Heart right ventricle (tissue), 16 donors: ENCODE measurements at regions of chr1 and their contacts with region 1.

Region 1: DNA sequence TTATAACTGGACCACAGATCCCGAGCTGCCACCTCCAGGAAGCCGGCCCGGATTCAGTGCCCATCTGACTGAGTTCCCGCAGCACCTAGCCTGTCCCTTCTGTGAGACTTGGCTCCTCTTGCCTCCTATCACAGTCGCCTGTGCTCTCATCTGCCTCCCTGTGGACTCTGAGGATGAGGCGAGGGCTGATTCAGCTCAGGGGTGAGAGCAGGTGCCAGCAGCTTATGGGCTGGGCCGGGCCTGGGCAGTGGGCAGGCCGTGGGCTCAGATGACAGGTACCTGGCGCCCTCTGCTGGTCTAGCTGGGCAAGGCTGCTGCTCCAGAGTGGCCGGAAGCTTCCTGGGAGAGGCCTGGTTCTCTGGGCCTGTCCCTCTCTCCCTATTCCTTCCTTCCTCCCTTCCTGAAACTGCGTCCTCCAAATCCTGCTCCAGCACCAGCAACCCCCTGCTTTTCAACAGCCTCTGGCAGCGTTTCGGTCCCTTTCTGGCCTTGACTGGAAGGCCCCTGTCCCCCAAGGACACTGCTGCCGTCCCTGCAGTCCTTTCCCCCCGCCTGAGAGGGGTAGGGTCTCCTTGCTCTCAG is 17.3 kb upstream of the PCSK9 start:
- DNase-seq: peak; percentile 70 to 78
- ATAC-seq: peak; percentile 90 to 99 (median 98)
- H3K4me3 ChIP-seq: no peak overlapping the region
- H3K27ac ChIP-seq: no peak overlapping the region
- H3K4me1 ChIP-seq: peaks cover 0 to 6% (median 0%) of the 10 kb centered on the region in 9 donors
- H3K27me3 ChIP-seq: peaks cover 0 to 16% (median 5%) of the 10 kb centered on the region in 7 donors
- CTCF ChIP-seq: peak; percentile 61 to 89 (median 83)

Region 2: DNA sequence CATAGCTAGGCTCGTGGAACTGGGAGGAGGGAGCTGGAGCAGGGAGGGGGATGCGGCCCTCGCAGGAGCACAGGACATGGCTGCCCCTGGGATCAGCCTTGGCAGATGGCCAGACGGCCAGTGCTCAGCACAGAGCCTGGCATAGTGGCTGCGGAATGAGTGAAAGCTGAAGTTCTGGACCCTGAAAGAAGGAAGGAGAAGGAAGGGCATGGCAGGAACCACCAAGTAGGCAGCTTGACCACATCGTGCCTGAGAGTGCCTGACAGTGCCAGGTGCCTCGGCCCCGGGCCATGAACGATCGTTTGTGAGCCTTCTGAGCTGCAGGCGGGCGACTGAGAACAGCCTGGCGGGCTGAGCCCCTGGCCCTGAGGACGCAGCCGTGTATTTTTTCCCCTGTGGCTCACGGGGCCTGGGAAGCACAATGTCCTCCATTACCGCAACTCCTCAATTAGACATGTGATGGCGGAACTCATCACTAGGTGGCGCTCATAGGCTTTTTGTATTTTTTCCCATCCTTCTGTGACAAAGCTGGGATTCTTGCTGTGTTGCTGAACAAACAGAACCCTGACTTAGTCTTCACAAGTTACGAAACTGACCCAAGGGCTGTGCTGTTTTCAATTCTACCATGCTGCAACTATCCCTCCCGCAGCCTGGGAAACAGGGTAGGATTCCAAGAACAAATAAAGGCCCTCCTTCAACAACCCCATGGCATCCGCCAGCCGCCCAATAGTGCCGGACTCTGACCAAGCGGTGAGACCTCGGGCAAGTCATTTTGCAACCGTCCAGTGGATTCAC is 71.5 kb before region 1 on chr1:
- intact Hi-C with region 1: loop called in 3 of 10 experiments (anchors 1 to 2 kb)
- DNase-seq: peak; percentile 55 to 74
- ATAC-seq: peak; percentile 78 to 90 (median 86)
- H3K4me3 ChIP-seq: peak overlapping the region in 8 of 10 donors; percentile 3 to 47 (median 34)
- H3K27ac ChIP-seq: peak overlapping the region in 6 of 10 donors; percentile 21 to 71 (median 54)
- H3K4me1 ChIP-seq: peaks cover 0 to 16% (median 8%) of the 10 kb centered on the region in 9 donors
- H3K27me3 ChIP-seq: no peaks in the 10 kb centered on the region
- CTCF ChIP-seq: peak; percentile 60 to 84 (median 80)

Region 3: GRCh38 chr1:55064071-55064581 is 42.1 kb after region 1 on chr1:
- intact Hi-C with region 1: no loop called
- DNase-seq: no peak
- ATAC-seq: peak in 6 of 8 donors; percentile 5 to 48 (median 32)
- H3K4me3 ChIP-seq: no peak overlapping the region
- H3K27ac ChIP-seq: peak overlapping the region in 9 of 10 donors; percentile 9 to 83 (median 72)
- H3K4me1 ChIP-seq: peaks cover 4 to 46% (median 35%) of the 10 kb centered on the region in 9 donors
- H3K27me3 ChIP-seq: no peaks in the 10 kb centered on the region
- CTCF ChIP-seq: peak in 1 of 9 donors; percentile 7